Panc1 (cell line): ENCODE measurements at regions of chrX and their contacts with region 1.

Region 1: GRCh38 chrX:16436348-16437188 is 213.4 kb upstream of the S100G start:
- DNase-seq: peak; percentile 32
- ATAC-seq: peak; percentile 88
- H3K4me3 ChIP-seq: no peak overlapping the region
- H3K27ac ChIP-seq: no peak overlapping the region
- H3K4me1 ChIP-seq: no peaks in the 10 kb centered on the region
- H3K27me3 ChIP-seq: no peaks in the 10 kb centered on the region
- CTCF ChIP-seq: peak; percentile 75

Region 2: GRCh38 chrX:16171944-16172343 is 264.6 kb before region 1 on chrX:
- CTCF ChIA-PET with region 1: no interaction called
- POLR2A ChIA-PET with region 1: no interaction called
- in situ Hi-C with region 1: no loop called
- intact Hi-C with region 1: no loop called
- DNase-seq: no peak
- ATAC-seq: no peak
- H3K4me3 ChIP-seq: no peak overlapping the region
- H3K27ac ChIP-seq: no peak overlapping the region
- H3K4me1 ChIP-seq: no peaks in the 10 kb centered on the region
- H3K27me3 ChIP-seq: no peaks in the 10 kb centered on the region
- CTCF ChIP-seq: no peak

Region 3: DNA sequence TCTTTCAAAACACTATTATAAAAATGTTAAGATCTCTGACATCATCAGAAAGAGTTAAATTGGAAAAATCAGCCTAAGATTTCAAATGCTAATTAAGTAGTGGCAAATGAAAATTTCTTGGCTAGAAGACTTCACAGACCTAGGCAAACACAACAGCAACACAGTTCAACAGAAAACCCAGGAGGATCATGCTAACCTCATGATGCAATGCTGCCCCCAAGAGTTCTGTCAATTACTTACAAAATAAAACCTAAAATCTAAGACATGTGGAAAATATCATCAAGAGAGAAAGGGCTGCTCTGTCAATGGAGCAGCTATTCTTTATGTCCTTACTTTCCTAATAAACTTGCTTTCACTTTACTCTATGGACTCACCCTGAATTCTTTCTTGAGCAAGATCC is 234.4 kb after region 1 on chrX:
- CTCF ChIA-PET with region 1: no interaction called
- POLR2A ChIA-PET with region 1: no interaction called
- in situ Hi-C with region 1: no loop called
- intact Hi-C with region 1: loop called (anchors 5 kb)
- DNase-seq: no peak
- ATAC-seq: 0 out of 2 replicates have a peak, but pooled peaks have one; percentile 51
- H3K4me3 ChIP-seq: no peak overlapping the region
- H3K27ac ChIP-seq: no peak overlapping the region
- H3K4me1 ChIP-seq: no peaks in the 10 kb centered on the region
- H3K27me3 ChIP-seq: no peaks in the 10 kb centered on the region
- CTCF ChIP-seq: peak; percentile 34; the same call in 1 of the 2 replicates